Mucosa of descending colon (tissue), 3 donors: ENCODE measurements at regions of chrX and their contacts with region 1.

Region 1: GRCh38 chrX:11533211-11533651 is 132.5 kb downstream of the ARHGAP6 start:
- DNase-seq: peak in 1 of 3 donors; percentile 2
- ATAC-seq: peak; percentile 98
- H3K4me3 ChIP-seq: no peak overlapping the region
- H3K4me1 ChIP-seq: no peaks in the 10 kb centered on the region
- CTCF ChIP-seq: peak; percentile 28

Region 2: DNA sequence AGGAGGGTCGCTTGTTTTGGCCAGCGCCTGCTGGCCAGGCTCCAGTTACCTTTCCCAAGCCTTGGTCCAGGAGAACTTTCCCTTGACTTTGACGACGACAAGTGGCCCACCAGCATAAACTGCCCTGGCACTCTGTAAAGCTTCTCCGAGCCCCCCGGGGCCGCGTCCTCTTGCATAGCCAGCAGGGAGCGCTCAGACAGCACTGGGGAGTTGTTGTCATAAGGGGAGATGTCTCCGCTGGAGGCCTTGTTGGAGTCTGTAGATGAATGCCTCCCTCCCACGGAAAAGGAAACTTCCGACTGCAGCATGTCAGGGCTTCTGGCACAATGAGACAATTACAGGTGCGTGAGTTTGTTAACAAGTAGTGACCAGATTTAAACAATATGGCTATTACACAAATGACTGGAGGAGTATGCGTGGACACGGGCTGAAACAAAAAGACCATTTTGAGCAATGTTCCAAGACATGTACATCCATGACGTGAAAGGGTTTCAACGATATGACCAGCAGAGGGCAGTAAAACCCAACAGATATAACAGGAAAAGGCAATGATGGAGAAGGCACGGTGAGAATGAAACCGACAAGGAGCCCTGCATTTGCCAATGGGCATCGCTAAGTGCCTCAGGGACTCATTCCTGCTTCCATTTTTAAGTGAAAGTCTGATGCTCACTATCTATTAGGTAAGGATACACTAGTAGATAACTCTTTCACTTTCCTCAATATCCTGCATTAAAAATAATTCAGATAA is 389.1 kb before region 1 on chrX:
- intact Hi-C with region 1: loop called in 1 of 2 experiments (anchors 10 kb)
- DNase-seq: peak in 2 of 3 donors; percentile 44 to 86
- ATAC-seq: peak; percentile 89
- H3K4me3 ChIP-seq: no peak overlapping the region
- H3K4me1 ChIP-seq: no peaks in the 10 kb centered on the region
- CTCF ChIP-seq: no peak

Region 3: DNA sequence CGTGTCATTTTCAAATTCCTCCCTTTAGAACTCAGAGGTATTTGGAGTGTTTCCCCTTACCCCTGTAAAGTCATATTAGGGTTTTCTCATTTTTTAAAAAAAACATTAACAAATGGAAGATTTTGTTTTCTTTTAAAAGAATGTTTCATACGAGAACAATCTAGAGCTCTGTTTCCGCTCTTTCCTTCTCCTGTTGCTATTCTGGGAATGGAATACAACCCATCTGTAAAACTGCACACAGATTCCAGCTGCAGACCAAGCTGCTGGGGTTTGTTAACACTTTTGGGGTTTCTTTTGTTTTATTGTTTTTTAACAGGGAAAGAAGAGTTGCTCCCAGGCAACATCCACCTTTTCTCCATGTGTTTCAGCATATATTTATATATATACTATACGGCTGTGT is 360.8 kb before region 1 on chrX:
- intact Hi-C with region 1: no loop called
- DNase-seq: no peak
- ATAC-seq: no peak
- H3K4me3 ChIP-seq: no peak overlapping the region
- H3K4me1 ChIP-seq: no peaks in the 10 kb centered on the region
- CTCF ChIP-seq: no peak

Region 4: DNA sequence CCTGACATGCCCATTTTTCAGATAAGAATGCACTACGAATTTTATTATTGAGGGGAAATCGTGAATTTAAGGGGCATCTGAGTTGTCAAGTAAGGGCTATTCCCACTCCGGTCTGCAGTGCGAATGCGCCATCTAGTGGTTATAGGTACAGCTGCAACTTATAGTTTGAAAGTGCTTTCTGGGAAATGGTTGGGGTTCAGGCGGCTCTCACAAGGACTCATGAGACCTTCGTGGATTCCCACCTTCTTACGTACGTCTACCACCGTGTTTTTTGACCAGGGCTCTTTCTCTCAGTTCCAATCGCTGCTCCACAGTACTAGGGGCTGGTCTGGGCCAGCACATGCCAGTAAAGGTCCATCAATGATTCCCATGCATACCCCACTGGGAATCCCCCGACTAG is 237.1 kb after region 1 on chrX:
- intact Hi-C with region 1: loop called in 1 of 2 experiments (anchors 10 kb)
- DNase-seq: peak in 1 of 3 donors; percentile 23
- ATAC-seq: peak; percentile 89
- H3K4me3 ChIP-seq: no peak overlapping the region
- H3K4me1 ChIP-seq: no peaks in the 10 kb centered on the region
- CTCF ChIP-seq: peak; percentile 46